ENCODE measurements at regions of chr12 and their contacts with region 1.

Region 1: GRCh38 chr12:104108755-104109445 is 29.1 kb downstream of the NFYB start:
- DNase-seq: peak; percentile 71 to 89
- ATAC-seq: peak; percentile 94 to 97
- H3K4me3 ChIP-seq: no peak overlapping the region
- H3K27ac ChIP-seq: no peak overlapping the region
- H3K4me1 ChIP-seq: peaks cover 9% of the 10 kb centered on the region; the same call in 2 of the 3 replicates
- CTCF ChIP-seq: peak; percentile 95
- EP300 ChIP-seq: no peak
- POLR2A ChIP-seq: no peak
- RAD21 ChIP-seq: peak; percentile 84 to 92

Region 2: DNA sequence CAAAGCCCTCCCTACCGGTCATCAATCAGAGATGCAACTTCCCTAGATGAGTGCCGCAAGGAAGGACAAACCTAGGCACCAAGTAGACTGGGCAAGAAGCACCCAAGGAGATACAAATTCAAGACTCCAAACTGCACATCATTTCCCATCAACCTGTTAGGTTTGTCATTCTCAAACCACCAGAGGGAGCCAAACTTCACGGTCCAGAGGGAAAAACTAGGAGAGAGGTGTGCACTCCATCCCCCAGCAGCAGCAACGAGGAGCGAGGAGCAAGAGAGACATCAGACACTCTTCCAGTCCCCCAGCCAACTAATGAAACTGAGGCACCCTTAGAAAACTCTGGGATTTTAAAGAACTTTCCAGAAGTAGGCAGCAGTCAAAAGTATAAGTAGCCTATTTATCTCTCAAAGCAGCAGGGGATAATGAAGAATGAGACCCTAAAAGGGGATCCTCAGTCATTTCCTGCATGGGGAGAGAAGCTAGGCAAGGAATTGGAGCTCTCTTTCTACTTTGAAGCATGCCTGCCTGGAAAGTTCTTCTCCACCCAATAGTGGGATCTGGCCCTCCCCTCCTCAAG is 230.9 kb before region 1 on chr12:
- CTCF ChIA-PET with region 1: interaction called, 11 read pairs
- POLR2A ChIA-PET with region 1: interaction called, 3 read pairs
- DNase-seq: peak; percentile 80 to 82
- ATAC-seq: peak; percentile 93 to 96
- H3K4me3 ChIP-seq: no peak overlapping the region
- H3K27ac ChIP-seq: no peak overlapping the region
- H3K4me1 ChIP-seq: peaks cover 15% of the 10 kb centered on the region; the same call in 2 of the 3 replicates
- CTCF ChIP-seq: peak; percentile 84
- EP300 ChIP-seq: no peak
- POLR2A ChIP-seq: no peak
- RAD21 ChIP-seq: peak; percentile 75 to 91

Region 3: GRCh38 chr12:103965590-103966504 is 143.1 kb before region 1 on chr12 and contains the start of gene TDG:
- CTCF ChIA-PET with region 1: interaction called, 16 read pairs
- POLR2A ChIA-PET with region 1: interaction called, 17 read pairs
- DNase-seq: peak; percentile 95 to 100
- ATAC-seq: peak; percentile 99
- H3K4me3 ChIP-seq: peak within 1 kb of the TSS; percentile 79
- H3K27ac ChIP-seq: peak within 1 kb of the TSS; percentile 93 to 94
- H3K4me1 ChIP-seq: peaks cover 29% of the 10 kb centered on the region
- CTCF ChIP-seq: no peak
- EP300 ChIP-seq: no peak
- POLR2A ChIP-seq: peak; percentile 71
- RAD21 ChIP-seq: peak in 1 of 2 experiments; percentile 31; a peak in 1 of 5 replicates
- polyA plus RNA-seq, gene TDG: 48.2 and 65.4 TPM in 2 replicates

Region 4: GRCh38 chr12:103997286-103997900 is 111.5 kb before region 1 on chr12:
- CTCF ChIA-PET with region 1: interaction called, 10 read pairs
- POLR2A ChIA-PET with region 1: no interaction called
- DNase-seq: no peak
- ATAC-seq: no peak
- H3K4me3 ChIP-seq: no peak overlapping the region
- H3K27ac ChIP-seq: no peak overlapping the region
- H3K4me1 ChIP-seq: no peaks in the 10 kb centered on the region
- CTCF ChIP-seq: no peak
- EP300 ChIP-seq: no peak
- POLR2A ChIP-seq: no peak
- RAD21 ChIP-seq: no peak

Region 5: DNA sequence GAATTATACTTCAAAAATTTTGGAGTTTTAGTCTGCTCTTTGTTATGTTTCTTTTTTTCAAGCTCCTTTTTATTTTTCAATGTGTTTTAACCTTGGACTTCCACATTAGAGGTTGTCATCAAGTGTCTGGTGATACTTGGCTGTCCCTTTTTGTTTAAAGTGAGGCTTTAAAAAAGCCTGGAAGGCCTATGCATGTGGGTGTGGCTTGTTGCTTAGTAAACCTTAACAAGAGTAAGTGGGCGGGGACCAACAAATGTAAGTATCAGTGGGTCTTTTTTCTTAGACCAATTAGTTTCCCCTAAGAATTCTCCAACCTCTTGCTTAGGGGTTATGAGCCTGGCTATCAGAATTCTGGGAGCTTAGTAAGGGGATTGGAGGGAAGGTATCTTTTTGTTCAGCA is 18.2 kb before region 1 on chr12:
- CTCF ChIA-PET with region 1: interaction called, 10 read pairs
- POLR2A ChIA-PET with region 1: no interaction called
- DNase-seq: no peak
- ATAC-seq: no peak
- H3K4me3 ChIP-seq: no peak overlapping the region
- H3K27ac ChIP-seq: no peak overlapping the region
- H3K4me1 ChIP-seq: no peaks in the 10 kb centered on the region
- CTCF ChIP-seq: no peak
- EP300 ChIP-seq: no peak
- POLR2A ChIP-seq: no peak
- RAD21 ChIP-seq: no peak

Region 6: GRCh38 chr12:104121001-104121400 is 12.1 kb after region 1 on chr12:
- CTCF ChIA-PET with region 1: interaction called, 21 read pairs
- POLR2A ChIA-PET with region 1: no interaction called
- DNase-seq: peak; percentile 36 to 50
- ATAC-seq: peak; percentile 95 to 96; a peak in 5 of 6 replicates
- H3K4me3 ChIP-seq: no peak overlapping the region
- H3K27ac ChIP-seq: peak overlapping the region; percentile 28; a peak in 2 of 6 replicates
- H3K4me1 ChIP-seq: peaks cover 56% of the 10 kb centered on the region
- CTCF ChIP-seq: no peak
- EP300 ChIP-seq: no peak
- POLR2A ChIP-seq: no peak
- RAD21 ChIP-seq: no peak